Head of caudate nucleus (tissue), 42 donors: ENCODE measurements at regions of chr5 and their contacts with region 1.

Region 1: GRCh38 chr5:87412630-87413342 is at the start of gene CCNH:
- DNase-seq: peak; percentile 96 to 100 (median 99)

Region 2: DNA sequence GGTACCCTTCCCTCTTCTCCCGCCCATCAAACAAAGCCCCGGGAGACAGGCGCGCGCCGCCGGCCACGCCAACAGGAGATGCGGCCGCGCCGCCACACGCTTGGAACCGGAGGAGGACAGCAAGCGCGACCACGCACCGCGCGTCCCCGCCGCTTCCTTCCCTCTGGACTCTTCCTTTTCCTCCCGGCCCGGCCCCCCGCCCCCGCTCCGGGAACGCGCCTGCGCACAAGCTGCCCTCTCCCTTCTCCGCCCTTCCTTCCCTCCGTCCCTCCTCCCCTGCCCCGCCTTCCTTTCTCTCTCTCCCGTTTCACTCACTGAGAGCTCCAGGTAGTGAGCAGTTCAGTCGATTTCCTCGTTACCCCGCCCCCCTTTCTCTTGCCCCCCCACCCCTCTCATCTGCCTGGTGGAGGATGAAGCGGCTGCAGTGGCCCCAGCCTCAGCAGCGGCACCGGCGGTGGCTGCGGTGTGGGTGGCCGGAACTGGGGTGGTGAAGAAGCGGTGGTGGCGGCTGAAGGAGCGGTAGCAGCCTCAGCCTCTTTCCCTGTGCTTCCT is 145.1 kb before region 1 on chr5 and contains the start of gene RASA1:
- intact Hi-C with region 1: loop called (anchors 10 kb)
- DNase-seq: peak; percentile 87 to 98 (median 96)

Region 3: DNA sequence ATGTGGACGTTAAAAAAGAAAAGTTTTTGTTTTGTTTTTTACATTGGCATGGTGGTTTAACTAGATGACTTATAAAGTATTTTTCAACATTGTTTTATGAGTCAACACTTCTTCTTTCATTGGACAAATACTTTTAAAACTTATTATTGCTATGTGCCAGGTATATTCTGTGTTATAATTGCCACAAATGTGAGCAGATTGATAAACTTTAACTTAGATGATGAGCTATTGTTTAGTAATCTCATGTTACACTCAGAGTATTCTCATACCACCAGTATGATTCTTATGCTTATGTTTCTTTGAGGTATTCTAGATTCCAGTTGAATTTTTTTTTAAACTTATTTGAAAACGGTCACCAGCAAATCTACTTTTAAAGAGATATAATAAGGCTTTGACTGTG is 84.8 kb before region 1 on chr5:
- intact Hi-C with region 1: no loop called
- DNase-seq: no peak

Region 4: DNA sequence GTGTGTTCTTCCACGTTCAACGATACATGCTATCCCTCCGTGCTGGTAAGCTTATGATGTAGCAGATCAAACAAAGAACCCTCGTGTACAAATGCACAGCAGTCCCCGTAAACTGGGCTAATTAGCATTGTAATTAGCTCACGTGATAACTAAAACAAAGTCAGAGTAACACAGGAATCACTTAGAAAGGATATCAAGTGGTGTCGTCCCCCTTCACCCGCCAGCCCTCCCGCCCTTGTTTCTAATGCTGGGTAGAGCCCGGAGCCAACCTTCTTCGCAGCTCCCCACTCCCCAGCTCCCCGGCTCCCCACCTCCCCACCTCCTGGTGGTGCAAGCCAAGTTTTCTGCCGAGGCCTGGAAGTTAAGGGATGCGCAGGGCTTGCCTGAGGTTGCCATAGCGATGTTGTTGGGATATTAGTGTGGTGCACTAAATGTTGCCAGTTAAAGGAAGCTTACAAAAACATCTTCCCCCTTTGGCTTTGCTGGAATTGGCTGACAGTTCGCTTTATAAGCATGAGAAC is 357.9 kb after region 1 on chr5:
- intact Hi-C with region 1: loop called (anchors 10 kb)
- DNase-seq: peak; percentile 8 to 75 (median 47)